AG04449 (cell line): ENCODE measurements at regions of chr12 and their contacts with region 1.

Region 1: GRCh38 chr12:6278439-6279255 is 31.8 kb upstream of the PLEKHG6 start:
- DNase-seq: no peak
- H3K4me3 ChIP-seq: peak overlapping the region; percentile 60
- CTCF ChIP-seq: peak; percentile 64

Region 2: DNA sequence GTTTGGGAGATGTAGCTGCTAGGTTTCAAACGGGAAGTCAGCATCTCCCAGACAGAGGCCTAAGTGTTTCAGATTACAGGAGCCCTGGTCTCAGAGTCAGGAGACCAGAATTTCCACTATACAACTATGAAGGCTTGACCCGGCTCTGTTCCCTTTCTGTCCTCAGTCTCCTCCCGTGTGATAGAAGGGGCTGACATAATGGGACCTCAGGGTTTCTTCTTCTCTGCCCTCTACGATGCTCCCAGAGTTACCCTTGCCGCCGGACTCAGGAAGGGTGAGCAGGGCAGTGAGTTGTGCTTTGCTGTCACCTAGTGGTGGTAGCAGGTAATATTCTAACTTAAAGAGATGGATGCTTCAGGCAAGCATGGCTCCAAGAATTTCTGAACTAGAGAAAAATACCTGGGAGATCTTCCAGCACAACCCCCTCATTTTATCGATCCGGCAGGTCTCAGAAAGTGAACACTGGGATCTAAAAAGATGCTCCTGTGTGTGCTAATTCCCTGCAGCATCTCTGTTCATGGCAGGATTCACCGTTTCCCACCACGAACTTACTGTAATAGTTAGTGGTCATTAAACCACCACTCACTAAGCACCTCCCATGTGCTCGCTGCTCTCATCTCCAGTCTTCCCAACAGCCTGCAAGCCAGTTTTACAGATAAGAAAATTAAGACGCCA is 238.6 kb before region 1 on chr12:
- CTCF ChIA-PET with region 1: interaction called, 55 read pairs
- POLR2A ChIA-PET with region 1: no interaction called
- DNase-seq: no peak
- H3K4me3 ChIP-seq: no peak overlapping the region
- CTCF ChIP-seq: peak; percentile 79

Region 3: DNA sequence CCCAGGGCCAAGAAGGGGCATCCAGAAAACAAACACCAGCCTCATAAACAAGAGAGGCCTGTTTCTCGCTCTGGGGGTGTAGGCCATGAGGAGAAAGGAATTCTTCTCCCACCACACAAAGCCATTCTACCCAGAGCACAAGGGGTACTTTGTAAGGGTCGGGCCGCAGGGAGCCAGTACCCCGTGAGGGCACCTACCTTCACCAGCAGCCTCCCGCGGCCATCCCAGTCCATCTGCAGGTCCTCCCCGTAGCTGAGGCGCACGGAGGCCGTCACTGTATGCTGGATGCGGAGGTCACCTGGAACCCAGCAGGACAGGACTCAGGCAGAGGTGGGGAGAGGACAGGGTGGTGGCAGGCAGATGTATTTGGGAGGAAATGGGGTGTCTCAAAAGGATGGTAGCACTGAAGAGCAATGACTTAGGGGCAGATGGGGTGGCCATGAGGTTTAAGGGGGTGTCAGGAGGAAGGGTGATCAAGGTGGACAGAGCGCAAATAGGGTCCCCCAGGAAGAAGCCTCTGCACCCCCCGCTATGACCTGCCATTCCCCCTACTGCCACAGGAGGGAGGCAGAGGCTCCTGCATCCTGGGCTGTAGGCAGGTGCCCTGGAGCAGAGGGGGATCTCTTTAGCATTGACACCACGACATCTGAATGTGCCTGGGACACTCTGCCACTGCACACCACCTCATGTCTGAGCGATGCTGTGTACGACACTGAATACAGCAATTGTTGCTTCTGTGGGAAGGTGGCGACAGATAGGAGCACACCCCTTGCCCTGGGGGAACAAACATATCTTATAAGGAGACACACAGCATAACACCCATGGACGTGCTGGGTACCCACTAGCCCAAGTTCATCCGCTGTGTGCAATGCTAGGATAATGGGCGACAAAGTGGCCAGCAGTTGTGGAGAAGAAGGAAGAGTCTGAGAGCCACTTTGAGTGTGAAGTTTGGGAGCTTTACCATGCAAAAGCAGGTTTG is 215.6 kb before region 1 on chr12:
- CTCF ChIA-PET with region 1: interaction called, 178 read pairs
- POLR2A ChIA-PET with region 1: interaction called, 3 read pairs
- DNase-seq: no peak
- H3K4me3 ChIP-seq: no peak overlapping the region
- CTCF ChIP-seq: peak; percentile 98

Region 4: DNA sequence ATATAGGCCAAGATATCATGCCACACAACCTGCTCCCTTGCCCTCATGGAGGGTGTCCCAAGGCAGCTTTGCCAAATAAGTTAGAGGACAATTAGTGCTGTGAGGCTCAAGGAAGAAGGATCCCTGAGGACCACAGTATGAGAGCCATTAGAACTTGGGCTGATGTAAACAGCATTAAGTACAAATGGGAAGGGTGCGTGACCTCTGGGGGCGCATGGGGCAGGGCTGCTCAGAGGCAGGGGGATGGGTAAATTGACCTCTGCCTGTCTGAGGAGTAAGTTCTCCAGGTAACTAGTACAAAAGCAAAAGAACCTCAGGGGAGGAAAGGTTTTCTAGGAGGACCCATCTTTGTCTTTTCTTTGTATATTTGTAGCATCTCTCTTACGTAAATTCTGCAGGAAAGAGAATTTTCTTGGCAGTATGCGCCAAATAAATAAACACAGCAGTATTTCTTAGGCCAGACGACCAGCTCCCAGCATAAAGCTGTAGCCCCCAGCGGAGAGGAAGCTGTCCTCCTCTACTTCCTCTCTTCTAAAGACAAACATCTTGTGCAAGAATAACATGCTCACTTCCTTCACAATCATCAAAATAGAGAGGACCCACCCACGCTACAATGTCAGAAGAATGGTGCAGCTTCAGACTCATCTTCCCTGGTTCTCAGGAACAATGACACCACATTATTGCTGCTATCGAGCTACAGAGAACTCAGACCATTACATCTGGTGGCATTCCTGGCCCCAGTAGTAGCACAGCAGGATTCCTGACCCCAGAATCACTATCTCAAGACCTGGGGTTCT is 137.8 kb before region 1 on chr12:
- CTCF ChIA-PET with region 1: no interaction called
- POLR2A ChIA-PET with region 1: no interaction called
- DNase-seq: no peak
- H3K4me3 ChIP-seq: no peak overlapping the region
- CTCF ChIP-seq: no peak

Region 5: DNA sequence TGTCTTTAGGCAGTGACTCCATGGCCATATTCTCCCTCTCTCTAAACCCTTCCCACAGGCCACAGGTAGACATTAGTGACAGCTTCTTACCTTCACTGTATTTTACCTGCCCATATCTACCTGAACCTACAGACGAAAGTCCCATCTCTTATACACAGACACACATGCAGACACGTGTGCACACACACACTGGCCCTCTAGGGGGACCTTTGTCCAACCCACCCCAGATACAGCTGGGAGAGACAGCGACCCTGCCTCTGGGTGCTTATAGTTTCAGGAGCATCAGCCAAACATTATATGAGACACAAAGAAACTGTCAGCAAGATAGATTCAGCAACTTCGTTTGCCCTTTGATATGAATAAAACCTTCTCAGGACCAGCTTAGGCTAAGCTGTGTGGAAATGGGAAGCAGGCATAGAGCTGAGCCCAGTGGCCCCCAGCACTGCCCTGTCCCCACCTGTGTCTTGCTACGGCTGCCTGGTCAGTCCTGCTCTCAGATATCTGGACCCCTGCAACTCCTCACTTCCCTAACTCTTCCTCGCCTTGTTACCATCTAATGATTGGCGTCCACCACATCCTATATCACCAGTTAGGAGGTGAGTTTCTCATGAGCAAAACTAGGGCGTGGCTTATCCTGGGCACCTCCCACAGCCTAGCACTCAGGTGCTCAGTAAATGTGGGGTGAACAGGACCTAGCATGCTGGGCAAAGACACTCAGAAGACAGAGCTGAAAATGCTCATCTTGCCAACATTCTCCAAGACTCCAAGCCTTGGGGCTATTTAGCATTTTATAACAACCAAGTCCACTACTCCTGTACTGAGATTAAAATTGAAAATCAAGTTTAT is 90.5 kb before region 1 on chr12:
- CTCF ChIA-PET with region 1: interaction called, 269 read pairs
- POLR2A ChIA-PET with region 1: no interaction called
- DNase-seq: no peak
- H3K4me3 ChIP-seq: no peak overlapping the region
- CTCF ChIP-seq: no peak

Region 6: GRCh38 chr12:6230321-6231110 is 48.1 kb before region 1 on chr12:
- CTCF ChIA-PET with region 1: interaction called, 39 read pairs
- POLR2A ChIA-PET with region 1: no interaction called
- DNase-seq: no peak
- H3K4me3 ChIP-seq: no peak overlapping the region
- CTCF ChIP-seq: no peak

Region 7: GRCh38 chr12:6319446-6319845 is 40.8 kb after region 1 on chr12:
- CTCF ChIA-PET with region 1: no interaction called
- POLR2A ChIA-PET with region 1: no interaction called
- DNase-seq: no peak
- H3K4me3 ChIP-seq: no peak overlapping the region
- CTCF ChIP-seq: no peak